Ovary (tissue), 10 donors: ENCODE measurements at regions of chr3 and their contacts with region 1.

Region 1: DNA sequence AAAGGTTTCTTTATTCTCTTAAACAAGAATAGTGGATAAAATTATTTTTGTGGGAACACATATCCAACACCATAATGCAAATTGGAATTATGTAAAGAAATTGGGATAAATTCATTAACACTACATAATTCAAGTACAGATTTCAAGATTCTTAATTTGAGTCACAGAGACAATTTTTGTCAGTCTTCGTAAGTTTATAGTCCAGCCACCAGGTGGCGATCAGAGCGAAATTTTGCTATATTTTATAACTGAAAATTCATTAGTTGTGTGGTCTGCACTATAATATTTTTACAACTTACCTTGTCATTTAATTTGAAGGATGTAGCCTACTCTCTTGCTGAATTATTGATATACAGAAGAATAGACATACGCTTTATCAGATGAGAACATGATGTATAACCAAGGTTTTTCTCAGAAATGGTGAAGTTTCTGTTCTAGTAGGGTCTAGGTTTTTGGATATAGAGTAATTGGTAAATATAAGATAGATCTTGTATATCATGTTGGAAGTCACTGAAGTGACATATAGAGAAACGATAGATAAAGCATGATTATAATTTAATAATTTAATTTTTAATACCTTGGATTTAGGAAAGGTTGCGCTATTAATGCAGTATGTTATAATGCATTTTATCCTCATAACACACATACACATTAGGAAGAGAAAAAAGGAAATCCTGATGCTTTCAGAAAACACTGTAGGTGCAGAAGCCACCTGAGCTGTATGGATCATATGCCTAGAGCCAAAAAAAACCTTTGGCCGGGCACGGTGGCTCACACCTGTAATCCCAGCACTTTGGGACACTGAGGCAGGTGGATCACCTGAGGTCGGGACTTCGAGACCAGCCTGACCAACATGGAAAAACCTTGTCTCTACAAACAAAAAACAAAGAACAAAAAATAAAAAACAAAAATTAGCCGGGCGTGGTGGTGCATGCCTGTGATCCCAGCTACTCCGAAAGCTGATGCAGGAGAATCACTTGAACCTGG is 31.7 kb downstream of the PLSCR4 start:
- DNase-seq: peak; percentile 23 to 73 (median 55)
- H3K4me3 ChIP-seq: no peak overlapping the region
- H3K27ac ChIP-seq: no peak overlapping the region
- H3K4me1 ChIP-seq: peaks cover 6% of the 10 kb centered on the region
- H3K27me3 ChIP-seq: no peaks in the 10 kb centered on the region
- CTCF ChIP-seq: peak; percentile 59 to 78 (median 67)
- EP300 ChIP-seq: no peak
- POLR2A ChIP-seq: no peak

Region 2: GRCh38 chr3:146326670-146327543 is 107.7 kb after region 1 on chr3:
- intact Hi-C with region 1: loop called (anchors 5 to 10 kb)
- DNase-seq: peak; percentile 22 to 77 (median 47)
- H3K4me3 ChIP-seq: no peak overlapping the region
- H3K27ac ChIP-seq: no peak overlapping the region
- H3K4me1 ChIP-seq: no peaks in the 10 kb centered on the region
- H3K27me3 ChIP-seq: no peaks in the 10 kb centered on the region
- CTCF ChIP-seq: peak; percentile 14 to 77 (median 76)
- EP300 ChIP-seq: no peak
- POLR2A ChIP-seq: no peak

Region 3: GRCh38 chr3:146334151-146334550 is 115.0 kb after region 1 on chr3:
- intact Hi-C with region 1: loop called (anchors 5 to 10 kb)
- DNase-seq: peak; percentile 22 to 55 (median 44)
- H3K4me3 ChIP-seq: no peak overlapping the region
- H3K27ac ChIP-seq: no peak overlapping the region
- H3K4me1 ChIP-seq: no peaks in the 10 kb centered on the region
- H3K27me3 ChIP-seq: no peaks in the 10 kb centered on the region
- CTCF ChIP-seq: peak in 1 of 3 donors; percentile 9
- EP300 ChIP-seq: no peak
- POLR2A ChIP-seq: no peak

Region 4: DNA sequence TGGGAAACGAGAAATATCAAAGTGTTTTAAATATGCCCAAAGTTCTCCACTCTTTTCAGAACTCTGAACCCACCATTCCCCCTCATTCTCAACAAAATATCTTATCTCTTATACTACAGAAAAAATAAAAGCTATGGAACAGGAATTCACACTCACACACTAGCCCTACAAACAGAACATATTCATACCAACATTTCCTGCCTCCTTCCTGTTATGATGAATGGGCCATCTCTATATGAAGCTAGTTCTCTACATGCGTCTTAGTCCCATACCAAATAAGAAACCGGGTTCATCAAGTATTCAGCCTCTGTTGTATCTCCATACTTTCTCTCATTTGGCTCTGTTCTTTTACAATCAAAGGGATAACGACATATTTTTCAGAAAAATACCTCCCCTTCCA is 177.6 kb after region 1 on chr3:
- intact Hi-C with region 1: no loop called
- DNase-seq: no peak
- H3K4me3 ChIP-seq: no peak overlapping the region
- H3K27ac ChIP-seq: no peak overlapping the region
- H3K4me1 ChIP-seq: no peaks in the 10 kb centered on the region
- H3K27me3 ChIP-seq: no peaks in the 10 kb centered on the region
- CTCF ChIP-seq: no peak
- EP300 ChIP-seq: no peak
- POLR2A ChIP-seq: no peak

Region 5: DNA sequence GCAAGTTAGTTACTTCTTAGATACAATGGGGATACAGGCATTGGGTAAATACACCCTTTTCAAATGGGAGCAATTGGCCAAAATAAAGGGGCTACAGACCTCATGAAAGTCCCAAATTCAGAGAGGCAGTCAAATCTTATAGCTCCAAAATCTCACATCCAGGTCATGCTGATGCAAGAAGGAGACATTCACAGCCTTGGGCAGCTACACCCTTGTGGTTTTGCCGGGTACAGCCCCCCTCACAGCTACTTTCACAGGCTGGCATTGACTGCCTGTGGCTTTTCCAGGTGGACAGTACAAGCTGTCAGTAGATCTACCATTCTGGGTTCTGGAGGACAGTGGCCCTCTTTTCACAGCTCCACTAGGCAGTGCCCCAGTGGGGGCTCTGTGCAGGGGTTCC is 342.7 kb after region 1 on chr3:
- intact Hi-C with region 1: loop called in 1 of 4 experiments (anchors 10 kb)
- DNase-seq: no peak
- H3K4me3 ChIP-seq: no peak overlapping the region
- H3K27ac ChIP-seq: no peak overlapping the region
- H3K4me1 ChIP-seq: no peaks in the 10 kb centered on the region
- H3K27me3 ChIP-seq: no peaks in the 10 kb centered on the region
- CTCF ChIP-seq: no peak
- EP300 ChIP-seq: no peak
- POLR2A ChIP-seq: no peak

Region 6: GRCh38 chr3:146577662-146578061 is 358.5 kb after region 1 on chr3:
- intact Hi-C with region 1: loop called in 1 of 4 experiments (anchors 5 kb)
- DNase-seq: peak in 3 of 5 donors; percentile 14 to 58 (median 35)
- H3K4me3 ChIP-seq: no peak overlapping the region
- H3K27ac ChIP-seq: no peak overlapping the region
- H3K4me1 ChIP-seq: no peaks in the 10 kb centered on the region
- H3K27me3 ChIP-seq: no peaks in the 10 kb centered on the region
- CTCF ChIP-seq: peak in 2 of 3 donors; percentile 43 to 65
- EP300 ChIP-seq: no peak
- POLR2A ChIP-seq: no peak